Right lobe of liver (tissue), 6 donors: ENCODE measurements at regions of chr9 and their contacts with region 1.

Region 1: DNA sequence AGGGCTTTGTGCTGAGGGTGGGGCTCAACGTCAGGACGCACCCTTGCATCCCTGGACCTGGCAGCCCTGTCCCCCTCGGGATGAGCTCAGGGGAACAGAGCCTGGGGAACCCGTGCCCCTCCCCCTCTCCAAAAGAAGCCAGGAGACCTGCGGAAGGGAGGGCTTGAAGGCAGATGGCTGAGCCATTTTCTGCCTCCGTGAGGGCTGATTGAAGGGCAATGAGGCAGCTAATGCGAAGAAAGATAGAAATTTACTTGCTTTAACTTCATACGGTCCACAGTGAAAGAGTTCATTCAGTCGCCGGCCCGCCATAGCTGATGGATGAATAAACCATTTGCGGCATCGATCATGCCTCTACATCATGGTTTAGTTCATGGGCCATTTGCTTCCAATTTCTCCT is 28.8 kb downstream of the ASS1 start:
- DNase-seq: no peak
- ATAC-seq: no peak
- H3K4me3 ChIP-seq: no peak overlapping the region
- H3K27ac ChIP-seq: no peak overlapping the region
- H3K4me1 ChIP-seq: no peaks in the 10 kb centered on the region
- H3K27me3 ChIP-seq: no peaks in the 10 kb centered on the region
- CTCF ChIP-seq: no peak
- POLR2A ChIP-seq: no peak

Region 2: DNA sequence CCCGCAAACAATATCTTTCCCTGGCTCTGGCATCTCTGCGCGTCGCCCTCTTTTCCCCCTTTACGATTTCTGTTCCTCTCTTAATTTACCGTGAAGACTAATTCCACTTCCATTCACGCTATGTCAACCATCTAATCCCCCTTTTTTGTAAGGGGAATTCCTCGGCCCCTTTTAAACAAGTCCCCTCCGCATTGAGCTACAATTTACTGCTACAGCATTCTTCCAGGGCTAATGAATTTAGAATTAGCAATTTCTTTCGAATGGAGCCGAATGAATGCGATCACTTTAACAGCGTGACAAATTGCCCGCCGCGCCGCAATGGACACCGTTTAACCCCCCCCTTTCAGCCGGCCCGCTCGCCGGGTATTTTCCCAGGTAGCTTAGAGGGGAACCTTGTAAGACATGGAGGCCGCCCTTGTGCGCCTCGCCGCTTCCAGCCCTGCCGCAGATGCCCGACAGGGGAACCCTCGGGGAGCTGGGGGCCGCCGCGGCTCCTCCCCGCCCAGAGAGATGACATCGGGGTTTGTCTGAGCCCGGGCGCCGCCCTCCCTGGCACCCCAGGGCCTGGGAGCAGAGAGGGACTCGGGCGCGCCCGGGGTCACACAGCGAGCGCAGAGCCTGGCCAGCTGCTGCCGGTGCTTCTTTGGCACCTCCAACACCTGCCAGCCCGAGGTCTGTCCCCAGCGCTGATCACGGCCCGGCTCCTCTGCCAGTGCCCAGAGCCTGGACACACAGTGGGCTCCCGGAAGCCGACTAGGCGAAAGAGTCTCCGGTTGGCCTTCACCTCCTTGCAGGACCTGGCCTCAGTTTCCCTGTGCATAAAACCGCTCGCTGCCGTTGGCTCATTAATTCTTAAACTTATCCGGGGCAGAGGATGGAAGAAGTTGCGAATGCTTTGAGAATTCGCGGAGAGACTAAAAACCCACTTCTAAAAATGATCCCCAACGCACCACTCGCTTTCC is 192.1 kb after region 1 on chr9:
- intact Hi-C with region 1: loop called in 1 of 2 experiments (anchors 5 kb)
- DNase-seq: no peak
- ATAC-seq: no peak
- H3K4me3 ChIP-seq: no peak overlapping the region
- H3K27ac ChIP-seq: no peak overlapping the region
- H3K4me1 ChIP-seq: peaks cover 0 to 27% (median 0%) of the 10 kb centered on the region in 4 donors
- H3K27me3 ChIP-seq: peaks cover 17 to 50% of the 10 kb centered on the region in 2 donors
- CTCF ChIP-seq: no peak
- POLR2A ChIP-seq: no peak

Region 3: DNA sequence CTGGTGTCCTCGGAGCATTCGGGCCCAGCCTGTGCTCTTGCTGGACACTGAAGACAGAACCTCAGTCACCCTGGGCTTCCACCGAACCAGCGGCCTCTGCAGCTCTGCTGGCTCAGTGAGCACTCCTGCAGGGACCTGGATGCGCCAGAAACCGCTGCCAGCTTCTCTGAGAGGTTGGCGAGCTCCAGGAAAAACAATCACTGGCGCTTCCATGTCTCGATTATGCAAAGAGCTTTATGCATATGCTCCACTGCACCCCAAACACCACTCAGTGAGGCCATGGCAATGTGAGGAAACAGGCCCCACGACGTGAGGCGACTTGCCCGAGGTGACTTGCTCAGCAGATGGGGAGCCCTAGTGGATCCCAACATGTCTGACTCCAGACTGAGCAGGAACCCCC is 201.8 kb after region 1 on chr9:
- intact Hi-C with region 1: loop called in 1 of 2 experiments (anchors 5 kb)
- DNase-seq: no peak
- ATAC-seq: no peak
- H3K4me3 ChIP-seq: no peak overlapping the region
- H3K27ac ChIP-seq: no peak overlapping the region
- H3K4me1 ChIP-seq: no peaks in the 10 kb centered on the region
- H3K27me3 ChIP-seq: no peaks in the 10 kb centered on the region
- CTCF ChIP-seq: no peak
- POLR2A ChIP-seq: no peak